ENCODE measurements at regions of chr11 and their contacts with region 1.

Region 1: GRCh38 chr11:43738590-43739409 is 58.3 kb downstream of the HSD17B12 start:
- DNase-seq: peak in 3 of 5 donors; percentile 26 to 36 (median 35)
- ATAC-seq: peak; percentile 77 to 89 (median 86)
- H3K4me3 ChIP-seq: peak overlapping the region in 4 of 12 donors; percentile 5 to 37 (median 28)
- H3K27ac ChIP-seq: peak overlapping the region; percentile 48 to 92 (median 77)
- H3K4me1 ChIP-seq: peaks cover 6 to 53% (median 38%) of the 10 kb centered on the region in 12 donors
- H3K27me3 ChIP-seq: no peaks in the 10 kb centered on the region
- CTCF ChIP-seq: no peak
- POLR2A ChIP-seq: no peak

Region 2: GRCh38 chr11:43680521-43681400 is 58.0 kb before region 1 on chr11 and contains the start of gene HSD17B12:
- intact Hi-C with region 1: loop called in 2 of 10 experiments (anchors 10 kb)
- DNase-seq: peak; percentile 99 to 100 (median 100)
- ATAC-seq: peak; percentile 100
- H3K4me3 ChIP-seq: peak within 1 kb of the TSS; percentile 75 to 98 (median 90)
- H3K27ac ChIP-seq: peak within 1 kb of the TSS; percentile 42 to 98 (median 92)
- H3K4me1 ChIP-seq: peaks cover 0 to 43% (median 24%) of the 10 kb centered on the region in 12 donors
- H3K27me3 ChIP-seq: no peaks in the 10 kb centered on the region
- CTCF ChIP-seq: peak in 1 of 12 donors; percentile 26
- POLR2A ChIP-seq: peak in 1 of 2 donors; percentile 93
- total RNA-seq, gene HSD17B12: 40.5 to 114 (median 80.1) TPM

Region 3: GRCh38 chr11:43789700-43790443 is 51.1 kb after region 1 on chr11:
- intact Hi-C with region 1: loop called in 1 of 10 experiments (anchors 10 kb)
- DNase-seq: no peak
- ATAC-seq: no peak
- H3K4me3 ChIP-seq: no peak overlapping the region
- H3K27ac ChIP-seq: no peak overlapping the region
- H3K4me1 ChIP-seq: peaks cover 0 to 5% (median 0%) of the 10 kb centered on the region in 12 donors
- H3K27me3 ChIP-seq: no peaks in the 10 kb centered on the region
- CTCF ChIP-seq: no peak
- POLR2A ChIP-seq: no peak